Right ventricle myocardium inferior (tissue), 1 donor: ENCODE measurements at regions of chr1 and their contacts with region 1.

Region 1: GRCh38 chr1:39474810-39475209 is 16.6 kb upstream of the BMP8A start:
- DNase-seq: no peak
- ATAC-seq: peak; percentile 79

Region 2: DNA sequence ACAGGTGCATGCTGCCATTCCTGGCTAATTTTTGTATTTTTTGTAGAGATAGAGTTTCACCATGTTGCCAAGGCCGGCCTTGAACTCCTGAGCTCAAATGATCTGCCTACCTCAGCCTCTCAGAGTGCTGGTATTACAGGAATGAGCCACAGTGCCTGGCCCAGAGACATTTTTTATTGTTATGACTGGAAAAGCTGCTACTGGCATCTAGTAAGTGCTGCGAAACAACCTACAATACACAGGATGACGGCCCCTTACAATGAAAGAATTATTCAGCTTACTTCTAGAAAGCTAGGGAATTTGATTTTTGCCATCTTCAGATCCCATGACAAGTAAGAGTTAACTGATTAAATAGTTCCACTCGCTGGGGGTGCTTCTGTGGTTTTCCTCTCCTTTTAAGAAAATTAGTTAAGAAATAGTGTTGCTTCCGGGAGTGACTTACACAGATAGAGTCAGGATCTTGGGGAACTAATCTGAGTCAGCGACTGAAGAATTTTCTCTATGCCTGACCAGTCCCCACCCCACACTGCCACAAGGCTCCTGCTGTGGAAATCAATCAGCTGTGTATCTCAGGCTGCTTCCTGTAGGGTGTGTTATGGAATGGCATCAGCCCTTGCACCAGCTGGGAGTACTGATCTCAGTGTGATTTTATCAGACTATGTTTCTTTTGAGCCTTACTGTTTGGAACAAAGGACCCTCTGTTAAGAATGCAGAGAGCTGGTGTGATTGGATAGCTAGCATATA is 76.4 kb before region 1 on chr1:
- intact Hi-C with region 1: no loop called
- DNase-seq: peak; percentile 71
- ATAC-seq: peak; percentile 83

Region 3: DNA sequence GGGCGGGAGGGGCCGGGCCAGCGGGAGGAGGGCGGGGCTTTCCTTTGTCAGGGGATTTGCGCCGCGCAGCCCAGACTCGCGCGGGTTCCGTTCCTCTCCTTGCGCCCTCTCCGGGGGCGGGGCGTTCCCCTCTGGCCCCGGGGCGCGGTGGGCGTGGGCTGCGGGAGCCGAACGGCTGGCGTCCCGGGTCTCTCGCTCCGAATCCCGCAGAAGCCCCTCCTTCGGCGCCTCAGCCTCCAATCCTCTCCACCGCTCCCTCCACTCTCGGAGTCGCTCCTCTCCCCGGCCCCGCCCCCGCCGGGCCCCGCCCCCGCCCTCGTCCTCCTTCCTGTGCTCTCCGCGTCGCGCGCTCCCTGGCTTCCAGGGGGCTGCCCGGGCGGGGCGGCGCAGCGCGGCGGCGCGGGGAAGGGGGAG is 66.2 kb before region 1 on chr1:
- intact Hi-C with region 1: no loop called
- DNase-seq: peak; percentile 97
- ATAC-seq: peak; percentile 94

Region 4: GRCh38 chr1:39499668-39500067 is 24.9 kb after region 1 on chr1:
- intact Hi-C with region 1: loop called (anchors 1 kb)
- DNase-seq: no peak
- ATAC-seq: peak; percentile 81

Region 5: GRCh38 chr1:39538588-39539465 is 64.0 kb after region 1 on chr1:
- intact Hi-C with region 1: loop called (anchors 5 kb)
- DNase-seq: no peak
- ATAC-seq: peak; percentile 88